ENCODE measurements at regions of chr2 and their contacts with region 1.

Region 1: GRCh38 chr2:165953655-165954606 is at the start of gene TTC21B:
- DNase-seq: peak; percentile 93
- ATAC-seq: peak; percentile 97
- H3K4me3 ChIP-seq: peak within 1 kb of the TSS; percentile 88 to 97 (median 91)
- H3K27ac ChIP-seq: peak within 1 kb of the TSS; percentile 84
- H3K4me1 ChIP-seq: peaks cover 48% of the 10 kb centered on the region
- H3K27me3 ChIP-seq: no peaks in the 10 kb centered on the region; a peak in 1 of 5 replicates
- CTCF ChIP-seq: peak; percentile 90
- EP300 ChIP-seq: peak in 1 of 2 experiments; percentile 30; a peak in 1 of 4 replicates
- POLR2A ChIP-seq: peak; percentile 86
- RAD21 ChIP-seq: peak; percentile 87
- total RNA-seq, gene TTC21B: 63.0 and 67.1 TPM in 2 replicates

Region 2: DNA sequence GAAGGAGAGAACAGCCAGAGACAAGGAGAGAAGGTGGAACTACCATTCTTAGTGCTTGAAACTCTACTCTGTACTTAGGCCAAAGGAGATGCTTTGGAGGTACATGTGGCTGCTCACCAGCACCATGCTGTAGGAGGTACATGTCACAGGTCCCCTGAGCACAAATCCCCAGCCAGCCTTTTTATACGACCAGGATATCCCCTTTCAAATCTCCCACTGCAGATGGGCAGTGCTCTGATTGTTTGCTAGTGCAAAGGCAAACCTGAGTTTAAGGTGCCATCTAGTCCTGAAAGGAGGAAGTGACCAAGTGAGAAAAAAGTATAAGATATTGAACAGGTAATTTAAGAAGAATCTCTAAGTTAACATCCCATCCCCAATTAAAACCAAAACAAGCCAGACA is 16.7 kb after region 1 on chr2:
- CTCF ChIA-PET with region 1: no interaction called
- POLR2A ChIA-PET with region 1: interaction called, 3 read pairs
- in situ Hi-C with region 1: no loop called
- intact Hi-C with region 1: loop called (anchors 1 kb)
- DNase-seq: no peak
- ATAC-seq: peak; percentile 50
- H3K4me3 ChIP-seq: no peak overlapping the region
- H3K27ac ChIP-seq: no peak overlapping the region
- H3K4me1 ChIP-seq: peaks cover 18% of the 10 kb centered on the region; the same call in 1 of the 2 replicates
- H3K27me3 ChIP-seq: peaks cover 1 to 11% of the 10 kb centered on the region in 2 experiments; a peak in 2 of 5 replicates
- CTCF ChIP-seq: peak; percentile 51
- EP300 ChIP-seq: no peak
- POLR2A ChIP-seq: no peak
- RAD21 ChIP-seq: no peak

Region 3: DNA sequence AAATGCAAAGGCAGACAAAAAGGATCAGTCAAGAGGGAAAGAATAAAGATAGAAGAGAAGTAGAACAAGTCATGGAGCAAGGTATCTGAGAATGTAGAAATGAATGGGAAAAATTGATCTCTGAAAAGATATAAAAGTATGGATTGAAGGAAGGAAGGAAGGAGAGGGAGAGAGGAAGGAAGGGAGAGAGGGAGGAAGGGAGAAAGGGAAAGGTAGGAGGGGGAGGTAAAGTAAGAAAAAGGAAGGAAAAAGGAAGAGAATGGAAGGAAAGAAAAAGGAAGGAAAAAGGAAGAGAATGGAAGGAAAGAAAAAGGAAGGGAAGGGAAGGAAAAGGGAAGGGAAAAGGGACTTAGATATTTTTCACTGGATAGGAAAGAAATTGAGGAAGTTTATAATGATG is 31.2 kb after region 1 on chr2:
- CTCF ChIA-PET with region 1: no interaction called
- POLR2A ChIA-PET with region 1: no interaction called
- in situ Hi-C with region 1: no loop called
- intact Hi-C with region 1: no loop called
- DNase-seq: no peak
- ATAC-seq: no peak
- H3K4me3 ChIP-seq: no peak overlapping the region
- H3K27ac ChIP-seq: no peak overlapping the region
- H3K4me1 ChIP-seq: no peaks in the 10 kb centered on the region; the same call in 1 of the 2 replicates
- H3K27me3 ChIP-seq: peaks cover 0 to 5% of the 10 kb centered on the region in 2 experiments; a peak in 2 of 5 replicates
- CTCF ChIP-seq: no peak
- EP300 ChIP-seq: no peak
- POLR2A ChIP-seq: no peak
- RAD21 ChIP-seq: no peak

Region 4: DNA sequence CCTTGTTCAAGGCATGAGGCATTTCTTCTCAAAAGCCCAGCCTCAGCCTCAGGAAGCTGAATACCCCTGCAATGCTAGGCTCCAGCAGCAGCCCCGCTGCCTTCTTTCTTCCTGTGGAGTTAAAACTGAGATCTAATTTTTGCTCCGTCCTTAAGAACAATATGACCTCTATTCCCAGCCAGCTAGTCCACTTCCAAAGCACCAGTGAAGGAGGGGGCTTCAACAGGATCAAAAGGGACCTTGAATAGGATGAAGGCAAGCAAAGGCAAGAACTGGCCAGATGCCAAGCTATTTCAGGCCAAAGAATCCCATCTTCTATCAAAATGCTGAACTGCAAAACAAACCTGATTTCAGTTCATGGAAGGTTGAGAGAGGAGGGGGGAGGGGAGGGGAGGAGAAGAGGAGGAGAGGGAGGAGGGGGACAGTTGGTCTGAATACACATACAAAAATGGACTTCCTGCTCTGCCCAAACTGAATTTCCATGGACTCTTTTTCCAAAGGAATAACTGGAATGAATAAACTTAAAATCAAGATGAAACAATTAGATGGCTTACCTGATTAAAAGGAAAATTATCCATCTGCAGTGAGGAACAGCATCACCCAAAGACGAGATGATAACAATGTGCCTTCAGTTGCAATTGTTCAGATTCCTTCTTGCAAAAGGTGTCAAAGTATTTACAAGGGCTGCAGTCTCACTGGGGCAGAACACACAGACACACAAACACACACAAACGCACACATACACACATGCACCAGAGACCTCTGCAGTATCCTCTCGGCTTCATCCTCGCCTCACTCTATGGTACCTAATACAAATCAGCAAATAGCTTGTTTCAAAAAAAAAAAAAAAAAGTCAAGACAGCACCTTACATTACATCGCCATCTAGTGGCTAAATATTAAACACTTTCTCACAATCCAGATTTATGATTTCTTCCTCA is 173.6 kb after region 1 on chr2 and contains the start of gene SCN1A:
- CTCF ChIA-PET with region 1: interaction called, 19 read pairs
- POLR2A ChIA-PET with region 1: interaction called, 21 read pairs
- in situ Hi-C with region 1: loop called (anchors 5 kb)
- intact Hi-C with region 1: loop called (anchors 1 kb)
- DNase-seq: peak; percentile 89
- ATAC-seq: peak; percentile 86
- H3K4me3 ChIP-seq: peak within 1 kb of the TSS; percentile 35 to 62 (median 50)
- H3K27ac ChIP-seq: peak within 1 kb of the TSS; percentile 72
- H3K4me1 ChIP-seq: peaks cover 93% of the 10 kb centered on the region
- H3K27me3 ChIP-seq: no peaks in the 10 kb centered on the region
- CTCF ChIP-seq: peak; percentile 81
- EP300 ChIP-seq: peak in 1 of 2 experiments; percentile 76; a peak in 2 of 4 replicates
- POLR2A ChIP-seq: no peak
- RAD21 ChIP-seq: peak; percentile 62; the same call in 1 of the 2 replicates
- total RNA-seq, gene SCN1A: 19.6 and 39.4 TPM in 2 replicates

Region 5: DNA sequence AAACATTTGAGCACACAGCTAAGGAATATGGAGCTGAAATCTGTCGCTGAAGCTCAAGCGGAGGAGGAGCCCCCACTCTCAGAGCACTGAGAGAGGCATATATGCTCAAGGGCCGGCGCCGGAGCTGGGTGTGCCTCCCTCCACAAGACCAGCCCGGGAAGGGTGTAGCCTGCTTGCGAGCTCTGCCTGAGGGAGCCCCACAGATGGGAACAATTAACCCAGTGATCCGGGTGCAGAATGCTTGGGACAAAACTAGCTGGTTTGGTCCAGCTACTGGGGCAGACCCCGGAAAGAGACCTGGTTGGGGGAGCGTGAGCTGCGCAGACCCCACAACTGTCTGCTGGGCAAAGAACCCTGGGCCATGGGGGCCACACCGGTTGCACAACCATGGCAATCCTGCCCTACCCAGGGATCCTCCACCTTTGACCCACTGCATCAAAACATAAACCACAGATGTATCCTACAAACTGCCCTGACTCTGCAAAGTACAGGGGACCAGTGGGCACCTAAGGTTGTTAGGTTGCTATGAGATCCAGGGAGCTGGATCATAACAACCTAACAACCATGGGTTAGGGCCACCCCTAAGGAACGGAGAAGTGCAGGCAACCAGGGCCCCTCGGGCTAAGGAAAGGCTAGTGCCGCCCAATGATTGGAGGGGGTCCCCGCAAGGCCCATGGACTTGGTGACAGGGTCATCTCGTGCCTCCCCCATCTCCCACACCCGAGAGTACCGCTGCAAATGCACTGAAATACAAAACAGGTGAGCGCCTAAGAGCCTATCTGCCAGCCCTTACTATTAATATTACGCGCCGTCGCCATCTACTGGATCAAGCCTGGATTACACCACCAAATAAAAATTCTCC is 227.3 kb after region 1 on chr2:
- CTCF ChIA-PET with region 1: interaction called, 19 read pairs
- POLR2A ChIA-PET with region 1: interaction called, 4 read pairs
- in situ Hi-C with region 1: loop called (anchors 5 kb)
- intact Hi-C with region 1: loop called (anchors 1 kb)
- DNase-seq: peak; percentile 79
- ATAC-seq: peak; percentile 96
- H3K4me3 ChIP-seq: no peak overlapping the region
- H3K27ac ChIP-seq: peak overlapping the region; percentile 34
- H3K4me1 ChIP-seq: peaks cover 42% of the 10 kb centered on the region
- H3K27me3 ChIP-seq: no peaks in the 10 kb centered on the region
- CTCF ChIP-seq: peak; percentile 91
- EP300 ChIP-seq: peak in 1 of 2 experiments; percentile 50; a peak in 2 of 4 replicates
- POLR2A ChIP-seq: no peak
- RAD21 ChIP-seq: peak; percentile 88

Region 6: DNA sequence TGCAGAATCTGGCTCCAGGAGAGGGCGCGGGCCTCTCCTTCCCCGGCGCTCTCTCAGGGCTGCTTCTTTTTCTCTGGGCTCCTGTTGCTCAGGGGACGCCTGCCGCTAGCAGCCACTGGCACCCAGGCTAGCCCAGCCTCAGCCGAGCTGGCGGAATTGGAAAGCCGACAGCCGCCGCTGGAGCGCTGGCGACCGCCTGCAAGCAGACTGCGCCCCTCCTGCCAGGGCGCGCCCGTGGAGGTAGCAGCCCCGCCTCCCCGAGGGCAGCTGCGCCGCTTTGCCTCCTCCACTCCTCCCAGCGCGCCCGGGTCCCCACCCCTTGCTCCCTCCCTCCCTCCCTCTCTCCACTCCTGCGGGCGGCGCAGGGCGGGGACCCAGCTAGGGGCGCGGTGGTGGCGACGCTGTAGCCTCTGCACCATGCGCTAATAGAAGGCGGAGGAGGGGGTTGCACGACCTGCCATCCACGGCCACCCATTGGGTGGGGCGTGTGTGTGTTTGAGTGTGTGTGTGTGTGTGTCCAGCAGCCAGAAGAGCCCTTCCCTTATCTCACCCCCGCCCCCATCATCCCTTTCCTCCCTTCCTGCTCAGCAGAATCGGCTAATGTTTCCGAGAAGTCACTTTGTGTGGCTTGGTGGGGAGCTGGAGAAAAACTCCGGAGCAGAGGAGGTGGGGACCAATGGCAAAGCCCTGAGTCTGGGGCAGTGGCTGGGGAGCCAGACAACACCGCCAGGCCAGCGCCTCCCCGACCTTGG is 422.0 kb after region 1 on chr2 and contains the start of gene SCN9A:
- CTCF ChIA-PET with region 1: no interaction called
- POLR2A ChIA-PET with region 1: interaction called, 16 read pairs
- in situ Hi-C with region 1: no loop called
- intact Hi-C with region 1: loop called (anchors 5 kb)
- DNase-seq: peak; percentile 82
- ATAC-seq: peak; percentile 92
- H3K4me3 ChIP-seq: peak within 1 kb of the TSS; percentile 75 to 85 (median 82)
- H3K27ac ChIP-seq: peak within 1 kb of the TSS; percentile 68
- H3K4me1 ChIP-seq: peaks cover 48% of the 10 kb centered on the region
- H3K27me3 ChIP-seq: no peaks in the 10 kb centered on the region; a peak in 1 of 5 replicates
- CTCF ChIP-seq: peak; percentile 52
- EP300 ChIP-seq: peak in 1 of 2 experiments; percentile 18; a peak in 2 of 4 replicates
- POLR2A ChIP-seq: peak; percentile 84 to 90
- RAD21 ChIP-seq: peak; percentile 33; the same call in 1 of the 2 replicates
- total RNA-seq, gene SCN9A: 11.8 and 15.3 TPM in 2 replicates

Region 7: GRCh38 chr2:166516712-166517303 is 562.9 kb after region 1 on chr2:
- CTCF ChIA-PET with region 1: no interaction called
- POLR2A ChIA-PET with region 1: no interaction called
- in situ Hi-C with region 1: no loop called
- intact Hi-C with region 1: loop called (anchors 1 kb)
- DNase-seq: peak; percentile 25
- ATAC-seq: peak; percentile 83
- H3K4me3 ChIP-seq: no peak overlapping the region
- H3K27ac ChIP-seq: no peak overlapping the region
- H3K4me1 ChIP-seq: no peaks in the 10 kb centered on the region
- H3K27me3 ChIP-seq: no peaks in the 10 kb centered on the region
- CTCF ChIP-seq: peak; percentile 69
- EP300 ChIP-seq: no peak
- POLR2A ChIP-seq: no peak
- RAD21 ChIP-seq: no peak

Measured in HepG2 (cell line).